PC-3 (cell line): ENCODE measurements at regions of chr1 and their contacts with region 1.

Region 1: DNA sequence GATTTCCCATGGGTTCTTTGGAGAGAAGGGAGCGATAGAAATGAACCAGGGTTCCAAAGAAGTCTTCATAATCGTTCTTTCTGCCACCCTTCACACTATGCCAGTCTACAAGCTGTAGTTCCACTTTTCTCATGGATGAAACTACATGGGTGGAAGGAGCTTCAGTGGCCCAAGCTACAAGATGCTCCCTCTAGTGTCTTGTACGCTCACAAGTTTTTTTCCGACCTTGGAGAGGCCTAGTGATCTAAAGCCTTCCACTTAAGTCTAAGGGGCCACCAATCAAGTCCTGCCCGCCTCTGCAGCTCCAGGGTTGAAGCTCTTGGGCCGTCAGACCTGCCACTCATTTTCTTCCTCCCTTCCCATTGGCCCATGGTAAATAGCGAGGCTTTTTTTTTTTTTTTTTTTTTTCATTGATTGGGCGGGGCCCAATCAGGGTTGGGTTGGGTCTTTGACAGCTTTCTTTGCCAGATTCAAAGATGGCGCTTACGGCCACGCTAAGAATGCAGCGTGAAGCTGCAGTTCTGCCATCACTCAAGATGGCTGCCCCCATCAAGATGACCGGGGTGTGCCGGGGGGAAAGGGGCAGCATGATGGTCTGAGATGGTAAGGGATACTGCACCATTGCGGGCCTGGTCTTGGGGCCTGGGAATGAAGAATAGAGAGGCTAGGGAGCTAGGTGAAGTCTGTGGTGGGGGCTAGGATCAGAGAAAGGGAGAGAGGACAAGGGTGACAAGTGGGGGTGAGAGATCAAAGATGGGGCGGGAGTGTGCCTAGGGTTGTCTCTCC is at the start of gene TOMM40L:
- DNase-seq: peak; percentile 100
- ATAC-seq: peak; percentile 89
- H3K4me3 ChIP-seq: peak within 1 kb of the TSS; percentile 79
- H3K27ac ChIP-seq: peak within 1 kb of the TSS; percentile 33
- H3K4me1 ChIP-seq: peaks cover 26% of the 10 kb centered on the region
- H3K27me3 ChIP-seq: no peaks in the 10 kb centered on the region
- CTCF ChIP-seq: peak; percentile 75
- total RNA-seq, gene TOMM40L: 23.2 and 26.1 TPM in 2 replicates

Region 2: DNA sequence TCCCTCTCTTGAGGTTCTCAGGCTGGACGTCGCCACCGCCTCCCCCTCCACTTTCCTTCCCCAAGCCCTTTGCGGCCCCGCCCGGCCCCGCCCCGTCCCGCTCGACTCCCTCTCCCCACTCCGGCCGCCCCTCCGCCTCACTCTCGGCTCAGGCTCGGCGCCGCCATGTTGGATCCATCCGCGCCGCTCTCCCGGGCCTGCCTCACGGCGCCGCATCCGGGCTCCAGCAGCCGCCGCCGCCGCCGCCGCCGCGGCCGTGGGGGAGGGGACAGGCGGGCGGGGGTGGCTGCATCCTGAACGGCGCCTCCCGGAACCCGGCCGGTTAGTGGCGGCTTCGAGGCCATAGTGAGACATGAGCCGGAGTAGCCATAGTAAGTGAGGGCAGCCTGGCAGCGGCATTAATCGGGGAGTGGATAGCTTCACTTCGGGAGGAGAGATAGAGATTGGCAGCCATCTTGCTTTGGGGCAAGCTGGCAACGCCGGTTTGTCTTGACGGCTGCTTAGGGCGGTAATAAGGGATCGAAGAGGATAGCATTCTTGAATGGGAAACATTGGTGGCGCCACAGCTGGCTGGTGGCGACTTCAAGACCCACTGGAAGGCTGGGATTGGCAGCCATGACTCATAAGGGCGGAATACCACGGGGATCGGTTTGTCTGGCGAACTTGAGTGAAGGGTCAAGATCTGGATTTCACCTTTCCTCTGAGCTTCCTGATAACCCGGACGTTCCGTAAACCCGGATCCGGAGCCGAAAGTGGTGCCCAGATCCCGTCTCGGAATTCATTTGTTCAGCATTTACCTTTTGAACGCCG is 93.1 kb before region 1 on chr1 and contains the start of gene DEDD:
- CTCF ChIA-PET with region 1: no interaction called
- POLR2A ChIA-PET with region 1: no interaction called
- intact Hi-C with region 1: no loop called
- DNase-seq: peak; percentile 97
- ATAC-seq: peak; percentile 84
- H3K4me3 ChIP-seq: peak within 1 kb of the TSS; percentile 90
- H3K27ac ChIP-seq: peak within 1 kb of the TSS; percentile 91
- H3K4me1 ChIP-seq: peaks cover 18% of the 10 kb centered on the region
- H3K27me3 ChIP-seq: no peaks in the 10 kb centered on the region
- CTCF ChIP-seq: 0 out of 2 replicates have a peak, but pooled peaks have one; percentile 39
- total RNA-seq, gene DEDD: 23.4 and 39.2 TPM in 2 replicates

Region 3: DNA sequence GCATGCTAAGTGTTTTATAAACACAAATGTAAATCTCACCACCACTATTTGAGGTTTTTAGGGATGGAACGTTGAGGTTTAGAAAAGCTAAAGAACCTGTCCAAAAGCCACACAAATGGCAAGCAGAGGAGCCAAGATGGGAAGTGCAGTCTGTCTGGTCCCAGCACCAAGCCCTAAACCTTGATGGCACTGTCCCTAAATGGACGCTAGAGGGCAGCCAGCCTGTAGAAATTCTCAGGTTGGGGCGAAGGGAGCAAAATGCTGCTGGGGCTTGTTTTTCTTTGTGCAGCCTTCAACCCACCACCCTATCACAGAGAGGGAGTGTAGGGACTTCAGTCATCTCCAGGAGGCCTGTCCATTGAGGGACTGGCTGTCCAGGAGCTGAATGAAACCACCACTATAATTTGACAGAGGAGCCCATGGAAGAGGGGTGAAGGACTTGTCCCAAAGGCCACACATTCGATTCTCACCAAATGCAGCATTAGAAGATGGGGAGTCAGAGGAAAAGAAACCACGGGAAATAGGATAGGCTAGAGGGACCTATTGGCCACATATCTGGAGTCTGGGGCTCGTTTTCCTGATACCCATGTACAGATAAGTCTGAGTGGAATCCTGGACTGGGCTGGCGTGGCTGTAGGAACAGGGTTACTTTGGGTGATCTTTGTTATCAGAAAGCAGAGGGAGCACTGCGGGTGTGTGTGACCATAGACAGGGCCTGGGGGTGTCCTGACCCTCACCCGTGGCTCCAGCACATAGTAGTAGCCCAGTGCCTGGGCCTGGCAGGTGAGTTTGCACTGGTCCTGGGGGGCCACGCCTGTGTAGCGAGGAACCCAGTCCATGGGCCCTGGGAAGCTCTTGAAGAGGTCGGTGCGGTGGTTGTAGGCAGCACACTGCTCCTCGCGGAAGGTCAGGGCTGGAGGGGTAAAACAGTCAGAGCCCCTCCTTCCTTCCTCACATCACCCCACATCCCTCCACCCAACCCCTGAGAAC is 33.0 kb before region 1 on chr1:
- CTCF ChIA-PET with region 1: interaction called, 8 read pairs
- POLR2A ChIA-PET with region 1: no interaction called
- intact Hi-C with region 1: loop called (anchors 1 kb)
- DNase-seq: peak; percentile 85
- ATAC-seq: peak; percentile 92
- H3K4me3 ChIP-seq: no peak overlapping the region
- H3K27ac ChIP-seq: no peak overlapping the region
- H3K4me1 ChIP-seq: no peaks in the 10 kb centered on the region
- H3K27me3 ChIP-seq: no peaks in the 10 kb centered on the region
- CTCF ChIP-seq: peak; percentile 96

Region 4: DNA sequence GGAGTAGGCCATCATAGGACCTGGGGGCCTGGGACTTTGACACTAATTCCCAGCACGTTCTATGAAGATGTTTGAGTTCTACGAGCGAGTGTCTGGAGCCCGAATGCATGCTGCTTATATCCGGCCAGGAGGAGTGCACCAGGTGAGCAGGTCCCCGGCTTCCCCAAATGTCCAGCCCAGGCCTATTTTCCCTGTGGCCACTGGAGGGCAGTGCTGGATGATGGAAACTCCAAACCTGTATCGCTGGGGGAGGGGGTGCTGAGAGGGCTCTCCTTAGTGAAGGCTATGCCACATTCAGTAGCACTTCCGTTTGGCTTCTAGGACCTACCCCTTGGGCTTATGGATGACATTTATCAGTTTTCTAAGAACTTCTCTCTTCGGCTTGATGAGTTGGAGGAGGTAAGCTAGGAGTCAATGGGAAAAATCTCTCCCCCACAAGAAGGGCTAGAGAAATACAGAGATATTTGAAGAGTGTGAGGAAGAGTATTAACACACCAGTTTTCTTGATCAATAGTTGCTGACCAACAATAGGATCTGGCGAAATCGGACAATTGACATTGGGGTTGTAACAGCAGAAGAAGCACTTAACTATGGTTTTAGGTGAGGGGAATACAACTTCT is 15.8 kb before region 1 on chr1:
- CTCF ChIA-PET with region 1: interaction called, 11 read pairs
- POLR2A ChIA-PET with region 1: no interaction called
- intact Hi-C with region 1: loop called (anchors 1 kb)
- DNase-seq: peak; percentile 92
- ATAC-seq: peak; percentile 96
- H3K4me3 ChIP-seq: no peak overlapping the region
- H3K27ac ChIP-seq: no peak overlapping the region
- H3K4me1 ChIP-seq: no peaks in the 10 kb centered on the region
- H3K27me3 ChIP-seq: no peaks in the 10 kb centered on the region
- CTCF ChIP-seq: peak; percentile 98

Region 5: DNA sequence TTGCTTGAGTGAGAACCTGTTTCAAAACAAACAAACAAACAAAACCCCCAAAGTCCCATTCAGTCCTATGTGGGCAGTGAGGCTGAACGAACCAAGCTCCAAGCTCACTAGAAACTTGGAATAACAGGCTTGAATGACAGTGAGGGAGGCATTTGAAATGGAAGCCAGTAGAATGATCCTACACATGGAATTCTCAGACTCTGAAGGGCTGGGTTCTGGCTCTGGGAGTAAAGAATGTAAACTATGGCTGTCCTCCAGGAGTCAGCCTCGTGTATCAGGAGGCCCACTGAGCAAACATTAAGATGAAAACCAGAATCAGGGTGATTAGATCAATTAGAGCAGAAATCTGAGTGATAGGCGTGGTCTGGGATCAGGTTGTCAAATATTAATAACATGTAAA is 47.7 kb after region 1 on chr1:
- CTCF ChIA-PET with region 1: no interaction called
- POLR2A ChIA-PET with region 1: no interaction called
- intact Hi-C with region 1: no loop called
- DNase-seq: no peak
- ATAC-seq: no peak
- H3K4me3 ChIP-seq: no peak overlapping the region
- H3K27ac ChIP-seq: no peak overlapping the region
- H3K4me1 ChIP-seq: no peaks in the 10 kb centered on the region
- H3K27me3 ChIP-seq: peaks cover 32% of the 10 kb centered on the region
- CTCF ChIP-seq: no peak

Region 6: DNA sequence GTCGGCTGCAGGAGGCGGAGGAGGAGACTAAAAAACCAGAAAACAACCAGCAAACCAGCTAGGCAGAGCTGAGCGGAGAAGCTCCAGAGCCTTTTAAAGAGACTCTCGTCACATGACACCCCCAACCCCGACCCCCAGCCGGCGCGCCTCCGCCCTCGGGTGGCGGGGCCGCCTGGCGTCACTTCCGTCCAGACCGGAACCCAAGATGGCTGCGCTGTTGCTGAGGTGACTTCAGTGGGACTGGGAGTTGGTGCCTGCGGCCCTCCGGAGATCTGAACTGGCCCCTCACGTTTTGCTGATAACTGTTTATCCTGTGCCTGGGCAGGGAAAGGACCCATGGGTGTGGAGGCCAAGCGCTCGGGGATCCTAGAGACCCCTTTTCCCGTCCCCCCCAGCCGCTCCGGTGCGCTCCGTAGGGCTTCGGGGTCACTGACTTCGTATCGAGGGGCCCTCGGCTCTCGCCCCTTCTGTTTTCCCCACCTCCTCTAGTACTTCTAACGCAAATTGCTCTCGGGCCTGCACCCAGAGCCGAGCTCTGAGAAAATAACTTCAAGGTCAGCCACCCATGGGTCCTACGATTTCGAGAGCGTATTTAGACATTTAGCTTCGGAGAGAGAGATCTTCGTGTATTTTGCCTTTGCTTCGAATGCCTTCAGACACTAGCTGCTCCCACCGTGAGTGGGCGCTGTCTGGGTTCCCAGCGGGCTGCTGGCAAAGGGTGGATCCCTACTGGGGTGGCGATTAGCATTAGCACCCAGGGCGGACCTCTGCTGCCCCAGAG is 88.7 kb after region 1 on chr1 and contains the start of gene SDHC:
- CTCF ChIA-PET with region 1: interaction called, 9 read pairs
- POLR2A ChIA-PET with region 1: interaction called, 5 read pairs
- intact Hi-C with region 1: loop called (anchors 2 kb)
- DNase-seq: peak; percentile 90
- ATAC-seq: peak; percentile 97
- H3K4me3 ChIP-seq: peak within 1 kb of the TSS; percentile 86
- H3K27ac ChIP-seq: peak within 1 kb of the TSS; percentile 63
- H3K4me1 ChIP-seq: peaks cover 8% of the 10 kb centered on the region; the same call in 1 of the 2 replicates
- H3K27me3 ChIP-seq: no peaks in the 10 kb centered on the region
- CTCF ChIP-seq: peak; percentile 68
- total RNA-seq, gene SDHC: 26.1 and 30.1 TPM in 2 replicates

Region 7: GRCh38 chr1:161382214-161383019 is 156.7 kb after region 1 on chr1:
- CTCF ChIA-PET with region 1: interaction called, 29 read pairs
- POLR2A ChIA-PET with region 1: interaction called, 5 read pairs
- intact Hi-C with region 1: loop called (anchors 1 kb)
- DNase-seq: peak; percentile 91
- ATAC-seq: peak; percentile 92
- H3K4me3 ChIP-seq: peak overlapping the region; percentile 44; the same call in 1 of the 2 replicates
- H3K27ac ChIP-seq: peak overlapping the region; percentile 87
- H3K4me1 ChIP-seq: peaks cover 22% of the 10 kb centered on the region
- H3K27me3 ChIP-seq: no peaks in the 10 kb centered on the region
- CTCF ChIP-seq: peak; percentile 84